Calu3 (cell line): ENCODE measurements at regions of chr7 and their contacts with region 1.

Region 1: GRCh38 chr7:114099337-114099736 is 180.5 kb upstream of the PPP1R3A start:
- DNase-seq: no peak
- H3K4me3 Mint-ChIP-seq: no peak overlapping the region
- H3K27ac Mint-ChIP-seq: no peak overlapping the region
- H3K4me1 Mint-ChIP-seq: no peaks in the 10 kb centered on the region
- H3K27me3 Mint-ChIP-seq: no peaks in the 10 kb centered on the region
- CTCF ChIP-seq: no peak

Region 2: DNA sequence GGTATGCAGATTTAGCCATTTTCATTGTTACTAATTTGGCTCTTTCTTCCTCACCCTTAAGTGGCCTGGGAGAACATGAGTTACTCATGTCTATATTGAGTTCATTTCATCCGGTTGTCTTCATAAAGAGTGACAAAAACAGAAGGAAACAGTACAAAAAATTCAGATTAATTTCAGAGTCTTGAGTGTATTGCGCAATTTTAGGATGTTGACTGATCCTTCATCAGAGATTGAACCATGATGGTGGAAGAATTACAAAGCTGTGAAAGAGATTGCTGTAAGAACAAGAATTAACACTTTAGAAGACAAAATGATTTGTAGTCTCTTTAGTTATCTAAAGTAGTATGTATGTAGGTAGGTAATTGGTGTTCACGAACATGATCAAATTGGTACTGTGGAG is 13.5 kb after region 1 on chr7:
- CTCF ChIA-PET with region 1: no interaction called
- intact Hi-C with region 1: no loop called
- DNase-seq: no peak
- H3K4me3 Mint-ChIP-seq: no peak overlapping the region
- H3K27ac Mint-ChIP-seq: no peak overlapping the region
- H3K4me1 Mint-ChIP-seq: no peaks in the 10 kb centered on the region
- H3K27me3 Mint-ChIP-seq: no peaks in the 10 kb centered on the region
- CTCF ChIP-seq: no peak

Region 3: DNA sequence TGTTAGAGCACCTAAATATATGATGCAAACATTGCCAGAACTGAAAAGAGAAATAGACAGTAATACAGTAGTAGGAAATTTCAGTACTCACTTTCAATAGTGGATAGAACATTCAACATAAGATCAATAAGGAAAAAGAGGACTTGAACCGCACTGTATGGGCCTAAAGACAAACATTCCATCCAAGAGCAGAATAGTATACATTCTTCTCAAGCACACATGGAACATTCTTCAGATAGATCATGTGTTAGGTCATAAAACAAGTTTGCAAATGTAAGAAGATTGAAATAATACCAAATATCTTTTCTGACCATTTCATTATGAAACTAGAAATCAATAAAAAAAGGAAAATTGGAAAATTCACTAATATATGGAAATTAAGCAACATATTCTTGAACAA is 129.9 kb after region 1 on chr7:
- CTCF ChIA-PET with region 1: no interaction called
- intact Hi-C with region 1: loop called (anchors 5 kb)
- DNase-seq: no peak
- H3K4me3 Mint-ChIP-seq: no peak overlapping the region
- H3K27ac Mint-ChIP-seq: no peak overlapping the region
- H3K4me1 Mint-ChIP-seq: no peaks in the 10 kb centered on the region
- H3K27me3 Mint-ChIP-seq: no peaks in the 10 kb centered on the region
- CTCF ChIP-seq: no peak

Region 4: DNA sequence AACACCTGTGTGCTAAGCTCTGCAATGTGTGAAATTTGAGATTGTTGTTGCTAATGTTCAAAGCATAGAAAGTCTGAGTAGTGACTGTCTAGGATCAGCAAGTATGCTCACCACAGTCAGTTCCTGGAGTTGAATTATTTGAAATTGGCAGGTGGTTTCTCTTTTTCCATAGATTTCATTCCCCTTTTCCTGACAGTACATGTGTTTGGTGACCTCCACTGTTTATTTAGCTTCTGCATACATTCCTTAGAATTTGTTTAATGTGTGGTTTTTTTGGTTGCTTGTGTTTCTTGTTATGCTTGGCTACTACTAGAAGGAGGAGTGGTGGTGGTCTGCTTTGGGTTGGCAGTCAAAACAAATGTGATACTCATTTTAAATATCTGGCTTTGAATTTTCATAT is 367.6 kb after region 1 on chr7:
- CTCF ChIA-PET with region 1: no interaction called
- intact Hi-C with region 1: no loop called
- DNase-seq: no peak
- H3K4me3 Mint-ChIP-seq: no peak overlapping the region
- H3K27ac Mint-ChIP-seq: no peak overlapping the region
- H3K4me1 Mint-ChIP-seq: no peaks in the 10 kb centered on the region
- H3K27me3 Mint-ChIP-seq: no peaks in the 10 kb centered on the region
- CTCF ChIP-seq: no peak